ENCODE measurements at regions of chr14 and their contacts with region 1.

Region 1: GRCh38 chr14:41482861-41483260 is 123.8 kb upstream of the LRFN5 start:
- DNase-seq: no peak
- ATAC-seq: no peak

Region 2: GRCh38 chr14:41393512-41393911 is 89.3 kb before region 1 on chr14:
- intact Hi-C with region 1: no loop called
- DNase-seq: no peak
- ATAC-seq: no peak

Region 3: DNA sequence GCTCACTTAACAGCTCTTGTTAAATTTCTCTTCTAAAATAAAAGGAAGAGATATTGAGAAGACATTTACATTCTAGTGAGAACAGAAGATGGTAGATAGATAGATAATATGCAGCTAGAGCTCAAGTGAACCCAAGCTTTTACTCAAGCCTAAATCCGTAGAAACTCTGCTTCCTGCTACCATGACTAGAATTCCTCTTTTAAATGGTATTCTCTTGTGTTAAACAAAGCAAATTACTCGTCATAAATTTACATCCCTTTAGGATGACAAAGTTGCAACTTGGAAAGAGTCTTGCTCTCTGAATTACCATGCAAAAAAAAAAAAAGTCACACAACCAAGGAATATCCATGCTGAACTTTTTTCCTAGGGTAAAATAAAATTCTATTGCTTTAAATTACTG is 36.9 kb before region 1 on chr14:
- intact Hi-C with region 1: loop called (anchors 2 kb)
- DNase-seq: no peak
- ATAC-seq: no peak